Activated CD4-positive, alpha-beta T cell treated with anti-CD3 and anti-CD28 coated beads, Interleukin-2, amount 10 ng/mL, durations not matched to agents 24 days and 14 days (primary cell): ENCODE measurements at regions of chr5 and their contacts with region 1.

Region 1: DNA sequence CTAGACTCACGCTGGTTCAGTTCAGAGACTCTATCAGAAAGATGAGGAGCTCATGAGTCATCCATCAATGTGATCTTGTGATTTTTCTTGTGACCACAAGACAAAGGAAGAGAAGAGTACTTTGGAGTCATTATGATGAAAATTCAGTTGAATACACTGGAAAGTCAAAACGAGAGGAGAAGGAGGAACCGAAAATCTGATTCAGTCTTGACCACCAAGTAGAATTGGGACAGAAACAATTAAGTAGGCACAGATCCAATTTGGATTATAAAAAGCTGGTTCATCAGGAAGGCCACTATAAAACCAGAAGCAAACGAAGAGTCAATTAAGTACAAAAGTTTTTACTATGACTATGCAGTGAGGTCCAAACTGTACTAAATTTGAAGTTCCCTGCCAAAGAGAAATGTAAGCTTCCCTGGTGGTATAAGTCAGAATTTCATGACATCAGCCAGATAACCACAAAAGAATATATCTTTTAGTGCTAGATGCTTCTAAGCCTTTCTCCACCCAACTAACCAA is 90.9 kb downstream of the THBS4 start:
- DNase-seq: peak; percentile 78
- H3K4me3 Mint-ChIP-seq: peak overlapping the region; percentile 26
- H3K27ac Mint-ChIP-seq: peak overlapping the region; percentile 70
- H3K4me1 Mint-ChIP-seq: peaks cover 28% of the 10 kb centered on the region
- H3K27me3 Mint-ChIP-seq: no peaks in the 10 kb centered on the region

Region 2: DNA sequence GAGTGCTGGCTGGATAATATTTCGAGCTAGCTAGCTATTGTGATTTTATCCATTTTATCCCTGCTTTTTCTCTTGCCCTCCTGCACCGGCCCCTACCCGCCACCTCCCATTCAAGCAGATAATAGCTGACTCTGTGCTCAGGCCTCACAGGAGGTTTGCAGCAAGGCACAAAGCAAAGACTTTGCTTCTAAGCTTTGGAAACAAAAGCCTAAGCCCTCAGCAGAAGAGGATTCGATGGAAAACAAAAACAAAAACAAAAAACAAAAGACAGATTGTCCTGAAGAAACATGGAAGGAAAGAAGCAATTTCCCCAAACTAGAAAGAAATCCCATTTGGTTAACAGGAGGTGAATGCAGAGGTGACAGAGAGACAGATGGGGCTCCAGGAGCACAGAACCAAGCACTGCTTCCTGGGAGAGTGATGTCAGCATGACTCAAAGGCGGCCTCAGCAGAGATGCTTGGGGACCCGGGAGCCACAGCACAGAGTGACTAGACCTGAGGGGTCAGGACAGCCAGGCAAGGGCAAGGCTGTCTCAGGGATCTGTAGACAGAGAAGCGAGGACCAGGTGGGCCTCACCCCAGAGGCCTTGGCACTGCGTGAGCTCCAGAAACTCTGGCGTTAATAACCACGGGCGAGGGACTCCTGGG is 163.3 kb before region 1 on chr5:
- intact Hi-C with region 1: loop called (anchors 1 kb)
- DNase-seq: peak; percentile 67
- H3K4me3 Mint-ChIP-seq: peak overlapping the region; percentile 54
- H3K27ac Mint-ChIP-seq: peak overlapping the region; percentile 90
- H3K4me1 Mint-ChIP-seq: peaks cover 25% of the 10 kb centered on the region
- H3K27me3 Mint-ChIP-seq: peaks cover 3% of the 10 kb centered on the region

Region 3: GRCh38 chr5:80141147-80141671 is 15.2 kb after region 1 on chr5:
- intact Hi-C with region 1: loop called (anchors 1 kb)
- DNase-seq: no peak
- H3K4me3 Mint-ChIP-seq: no peak overlapping the region
- H3K27ac Mint-ChIP-seq: peak overlapping the region; percentile 84
- H3K4me1 Mint-ChIP-seq: peaks cover 51% of the 10 kb centered on the region
- H3K27me3 Mint-ChIP-seq: no peaks in the 10 kb centered on the region

Region 4: GRCh38 chr5:80181618-80182211 is 55.7 kb after region 1 on chr5:
- intact Hi-C with region 1: loop called (anchors 2 kb)
- DNase-seq: peak; percentile 87
- H3K4me3 Mint-ChIP-seq: peak overlapping the region; percentile 63
- H3K27ac Mint-ChIP-seq: peak overlapping the region; percentile 92
- H3K4me1 Mint-ChIP-seq: peaks cover 65% of the 10 kb centered on the region
- H3K27me3 Mint-ChIP-seq: no peaks in the 10 kb centered on the region

Region 5: GRCh38 chr5:80246001-80246758 is 120.2 kb after region 1 on chr5:
- intact Hi-C with region 1: loop called (anchors 2 kb)
- DNase-seq: no peak
- H3K4me3 Mint-ChIP-seq: peak overlapping the region; percentile 55
- H3K27ac Mint-ChIP-seq: peak overlapping the region; percentile 68
- H3K4me1 Mint-ChIP-seq: peaks cover 41% of the 10 kb centered on the region
- H3K27me3 Mint-ChIP-seq: no peaks in the 10 kb centered on the region